HAP-1 (cell line): ENCODE measurements at regions of chr3 and their contacts with region 1.

Region 1: GRCh38 chr3:179702271-179702947 is 49.6 kb downstream of the USP13 start:
- DNase-seq: no peak
- H3K4me3 ChIP-seq: no peak overlapping the region
- H3K4me1 ChIP-seq: peaks cover 16% of the 10 kb centered on the region
- H3K27me3 ChIP-seq: no peaks in the 10 kb centered on the region

Region 2: GRCh38 chr3:179653096-179653797 is 49.2 kb before region 1 on chr3:
- in situ Hi-C with region 1: loop called (anchors 5 kb)
- DNase-seq: peak; percentile 48 to 76
- H3K4me3 ChIP-seq: peak overlapping the region; percentile 84
- H3K4me1 ChIP-seq: peaks cover 14% of the 10 kb centered on the region
- H3K27me3 ChIP-seq: no peaks in the 10 kb centered on the region

Region 3: DNA sequence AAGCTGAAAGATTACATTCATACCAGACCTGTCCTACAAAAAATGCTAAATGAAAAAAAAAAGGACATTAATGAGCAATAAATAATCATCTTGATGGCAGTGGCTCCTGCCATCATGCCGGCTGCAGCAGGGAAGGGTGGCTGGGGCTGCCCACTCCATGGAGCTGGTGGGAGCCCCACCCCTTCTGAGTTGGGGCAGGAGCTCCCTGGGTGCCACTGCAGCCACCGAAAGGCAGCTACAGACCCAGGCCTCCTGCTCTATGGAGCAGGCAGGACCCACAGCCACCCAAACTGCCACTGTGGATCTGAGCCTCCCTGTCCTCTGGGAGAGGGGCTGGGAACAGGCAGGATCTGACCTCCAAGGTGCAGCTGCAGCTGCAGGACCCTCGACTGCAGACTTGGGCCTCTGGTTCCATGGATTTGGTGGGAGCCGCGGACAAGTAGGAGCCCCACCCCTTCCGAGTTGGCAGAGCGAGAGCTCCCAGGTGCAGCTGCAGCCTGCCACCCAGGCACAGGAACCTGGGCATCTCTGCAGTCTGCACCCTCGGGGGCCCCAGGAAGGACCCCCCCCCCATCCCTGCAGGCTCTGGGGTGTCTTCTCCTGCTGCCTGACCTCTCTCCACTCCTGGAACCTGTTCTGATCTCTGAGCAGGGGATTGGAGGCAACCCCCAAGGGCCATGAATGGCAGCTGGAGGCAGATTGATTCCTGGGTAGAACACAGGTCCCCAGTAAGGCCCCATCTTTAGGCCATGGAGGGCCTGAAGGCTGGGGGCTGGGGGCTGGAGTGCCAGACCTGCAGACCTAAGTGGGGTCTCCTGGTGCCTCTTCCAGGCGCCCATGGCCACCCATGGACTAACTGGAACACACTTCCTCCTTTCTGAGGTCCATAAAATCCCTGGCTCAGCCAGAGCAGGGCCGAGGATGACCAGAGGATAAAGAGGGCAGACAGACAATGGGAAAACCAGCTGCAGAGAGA is 829.2 kb after region 1 on chr3:
- in situ Hi-C with region 1: no loop called
- DNase-seq: no peak
- H3K4me3 ChIP-seq: no peak overlapping the region
- H3K4me1 ChIP-seq: no peaks in the 10 kb centered on the region
- H3K27me3 ChIP-seq: no peaks in the 10 kb centered on the region